H1 (cell line): ENCODE measurements at regions of chr6 and their contacts with region 1.

Region 1: DNA sequence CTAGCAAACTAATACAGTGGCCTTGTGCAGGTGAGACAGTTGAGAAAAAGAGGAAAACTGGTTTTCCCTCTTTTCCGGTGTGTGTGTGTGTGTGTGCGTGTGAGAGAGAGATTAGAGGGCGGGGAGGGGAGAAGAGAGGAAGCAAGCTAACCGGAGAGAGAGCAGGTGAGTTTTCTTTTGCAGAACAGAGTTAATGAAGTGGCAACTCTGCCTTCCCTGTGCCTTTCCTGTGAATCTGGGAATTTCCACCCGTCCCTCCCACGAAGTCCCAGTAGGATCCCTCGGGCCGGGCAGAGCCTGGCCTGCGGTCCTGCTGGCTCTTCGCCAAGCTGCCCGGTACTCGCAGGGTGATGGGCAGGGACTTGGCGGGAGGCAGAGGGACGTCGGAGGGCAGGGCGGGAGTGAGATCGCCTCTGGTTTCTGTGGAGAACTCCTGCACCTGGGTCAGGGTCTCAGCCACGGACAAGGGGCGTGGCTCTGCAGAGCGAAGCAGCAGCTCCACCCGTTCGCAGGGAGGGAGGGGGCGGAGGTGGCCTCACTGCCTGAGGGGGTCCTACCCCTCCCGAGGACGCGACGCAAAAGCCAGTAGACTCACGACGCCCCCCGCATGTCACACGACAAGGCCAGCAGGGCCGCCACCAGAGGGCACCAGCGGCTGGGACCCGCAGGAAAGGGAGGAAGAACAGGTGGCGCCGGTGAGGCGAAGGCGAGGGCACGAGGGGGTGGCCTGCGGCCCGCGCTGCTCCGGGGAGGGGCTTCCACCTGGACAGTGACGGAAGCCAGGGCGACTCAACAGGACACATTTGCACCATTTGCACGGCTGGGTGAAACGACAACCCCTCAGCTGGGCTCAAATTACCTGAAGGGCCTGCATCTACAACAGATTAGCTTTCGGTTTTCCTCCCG is 51.2 kb upstream of the RNF182 start:
- DNase-seq: peak; percentile 76 to 95
- H3K4me3 ChIP-seq: peak overlapping the region; percentile 13 to 52 (median 31); a peak in 7 of 8 replicates
- H3K27ac ChIP-seq: no peak overlapping the region
- H3K4me1 ChIP-seq: peaks cover 2 to 7% (median 5%) of the 10 kb centered on the region in 4 experiments; a peak in 5 of 7 replicates
- H3K27me3 ChIP-seq: peaks cover 0 to 20% (median 9%) of the 10 kb centered on the region in 4 experiments; a peak in 6 of 7 replicates
- CTCF ChIP-seq: peak; percentile 87 to 97 (median 88)
- EP300 ChIP-seq: no peak
- POLR2A ChIP-seq: peak in 1 of 2 experiments; percentile 24; a peak in 1 of 3 replicates
- RAD21 ChIP-seq: peak; percentile 66 to 77

Region 2: GRCh38 chr6:13859871-13860555 is 13.5 kb before region 1 on chr6:
- CTCF ChIA-PET with region 1: interaction called, 23 read pairs
- POLR2A ChIA-PET with region 1: interaction called, 30 read pairs
- DNase-seq: no peak
- H3K4me3 ChIP-seq: peak overlapping the region in 2 of 4 experiments; percentile 36 to 44; a peak in 3 of 8 replicates
- H3K27ac ChIP-seq: no peak overlapping the region
- H3K4me1 ChIP-seq: no peaks in the 10 kb centered on the region
- H3K27me3 ChIP-seq: no peaks in the 10 kb centered on the region
- CTCF ChIP-seq: no peak
- EP300 ChIP-seq: no peak
- POLR2A ChIP-seq: no peak
- RAD21 ChIP-seq: no peak

Region 3: GRCh38 chr6:13885601-13886000 is 12.1 kb after region 1 on chr6:
- CTCF ChIA-PET with region 1: interaction called, 32 read pairs
- POLR2A ChIA-PET with region 1: interaction called, 5 read pairs
- DNase-seq: no peak
- H3K4me3 ChIP-seq: no peak overlapping the region
- H3K27ac ChIP-seq: no peak overlapping the region
- H3K4me1 ChIP-seq: no peaks in the 10 kb centered on the region
- H3K27me3 ChIP-seq: no peaks in the 10 kb centered on the region
- CTCF ChIP-seq: no peak
- EP300 ChIP-seq: no peak
- POLR2A ChIP-seq: no peak
- RAD21 ChIP-seq: no peak

Region 4: GRCh38 chr6:13892007-13892645 is 18.6 kb after region 1 on chr6:
- CTCF ChIA-PET with region 1: interaction called, 32 read pairs
- POLR2A ChIA-PET with region 1: interaction called, 5 read pairs
- DNase-seq: no peak
- H3K4me3 ChIP-seq: no peak overlapping the region
- H3K27ac ChIP-seq: no peak overlapping the region
- H3K4me1 ChIP-seq: no peaks in the 10 kb centered on the region
- H3K27me3 ChIP-seq: no peaks in the 10 kb centered on the region
- CTCF ChIP-seq: no peak
- EP300 ChIP-seq: no peak
- POLR2A ChIP-seq: no peak
- RAD21 ChIP-seq: no peak